Astrocyte of the cerebellum (primary cell): ENCODE measurements at regions of chr11 and their contacts with region 1.

Region 1: DNA sequence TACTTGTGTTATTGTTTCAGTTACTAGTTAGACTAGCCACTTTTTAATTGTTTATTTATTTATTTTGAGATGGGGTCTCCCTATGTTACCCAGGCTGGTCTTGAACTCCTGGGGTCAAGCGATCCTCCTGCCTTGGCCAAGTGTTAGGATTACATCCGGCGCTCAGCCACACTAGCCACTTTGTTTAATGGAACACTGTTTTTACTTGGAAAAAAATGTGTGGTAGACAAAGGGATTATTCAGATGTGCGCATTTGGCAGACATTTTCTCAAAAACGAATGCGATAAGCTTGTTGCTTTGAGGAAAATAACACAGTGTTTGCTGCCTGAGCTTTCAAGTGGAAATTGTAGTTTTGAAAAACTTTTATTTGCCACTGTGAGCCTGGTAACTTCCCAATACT is 51.0 kb downstream of the CTNND1 start:
- DNase-seq: no peak
- H3K4me3 ChIP-seq: no peak overlapping the region
- CTCF ChIP-seq: no peak

Region 2: DNA sequence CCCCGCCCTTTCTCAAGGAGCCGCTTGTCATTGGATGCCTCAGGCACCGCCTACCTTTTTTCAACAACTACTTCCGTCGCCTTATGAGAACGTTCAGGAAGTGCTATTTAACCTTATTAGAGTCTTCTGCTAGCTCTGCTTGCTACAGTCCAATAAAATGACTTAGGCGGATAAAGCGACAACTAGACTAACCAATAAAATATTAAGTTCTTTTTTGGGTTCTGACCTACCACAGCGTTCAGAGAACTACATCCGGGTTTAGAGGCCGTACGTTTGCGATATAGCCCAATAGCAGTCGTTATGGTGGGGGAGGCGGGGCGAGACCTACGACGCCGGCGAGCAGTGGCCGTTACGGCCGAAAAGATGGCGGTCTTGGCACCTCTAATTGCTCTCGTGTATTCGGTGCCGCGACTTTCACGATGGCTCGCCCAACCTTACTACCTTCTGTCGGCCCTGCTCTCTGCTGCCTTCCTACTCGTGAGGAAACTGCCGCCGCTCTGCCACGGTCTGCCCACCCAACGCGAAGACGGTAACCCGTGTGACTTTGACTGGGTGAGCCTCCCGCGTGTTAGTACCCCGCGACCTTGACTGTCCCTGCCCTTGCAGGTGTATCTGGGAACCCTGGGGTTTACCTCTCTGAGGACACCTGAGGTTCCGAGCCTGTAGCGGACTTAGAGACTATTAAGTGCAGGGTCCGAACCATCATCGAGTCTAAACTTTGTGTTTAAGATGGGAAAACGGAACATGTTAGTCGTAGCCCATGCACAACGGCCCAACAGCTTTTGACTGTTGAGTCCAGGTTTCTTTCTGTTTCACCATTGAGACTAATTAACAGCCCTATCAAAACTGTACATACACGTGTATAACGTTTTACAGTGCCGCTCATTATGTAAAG is 100.1 kb before region 1 on chr11 and contains the start of gene TMX2:
- in situ Hi-C with region 1: loop called (anchors 5 kb)
- DNase-seq: peak; percentile 99
- H3K4me3 ChIP-seq: peak within 1 kb of the TSS; percentile 100
- CTCF ChIP-seq: no peak